ENCODE measurements at regions of chr1 and their contacts with region 1.

Region 1: GRCh38 chr1:34663031-34663430 is 91.8 kb upstream of the GJB5 start:
- DNase-seq: no peak
- ATAC-seq: no peak
- H3K4me3 ChIP-seq: no peak overlapping the region
- H3K27ac ChIP-seq: no peak overlapping the region
- H3K4me1 ChIP-seq: peaks cover 0 to 4% (median 0%) of the 10 kb centered on the region in 12 donors
- H3K27me3 ChIP-seq: peaks cover 0 to 7% (median 0%) of the 10 kb centered on the region in 9 donors
- CTCF ChIP-seq: no peak
- POLR2A ChIP-seq: no peak

Region 2: GRCh38 chr1:32900951-32901822 is 1761.8 kb before region 1 on chr1 and contains the start of gene TMEM54:
- intact Hi-C with region 1: loop called in 1 of 10 experiments (anchors 5 kb)
- DNase-seq: peak; percentile 61 to 76 (median 66)
- ATAC-seq: peak in 3 of 4 donors; percentile 74 to 87 (median 79)
- H3K4me3 ChIP-seq: peak within 1 kb of the TSS; percentile 43 to 76 (median 62)
- H3K27ac ChIP-seq: peak within 1 kb of the TSS in 4 of 12 donors; percentile 13 to 51 (median 30)
- H3K4me1 ChIP-seq: peaks cover 0 to 14% (median 7%) of the 10 kb centered on the region in 12 donors
- H3K27me3 ChIP-seq: peaks cover 0 to 33% (median 0%) of the 10 kb centered on the region in 9 donors
- CTCF ChIP-seq: no peak
- POLR2A ChIP-seq: no peak
- total RNA-seq, gene TMEM54: 7.5 to 15.9 (median 9.3) TPM

Measured in heart left ventricle (tissue), 16 donors.